Panc1 (cell line): ENCODE measurements at regions of chr7 and their contacts with region 1.

Region 1: DNA sequence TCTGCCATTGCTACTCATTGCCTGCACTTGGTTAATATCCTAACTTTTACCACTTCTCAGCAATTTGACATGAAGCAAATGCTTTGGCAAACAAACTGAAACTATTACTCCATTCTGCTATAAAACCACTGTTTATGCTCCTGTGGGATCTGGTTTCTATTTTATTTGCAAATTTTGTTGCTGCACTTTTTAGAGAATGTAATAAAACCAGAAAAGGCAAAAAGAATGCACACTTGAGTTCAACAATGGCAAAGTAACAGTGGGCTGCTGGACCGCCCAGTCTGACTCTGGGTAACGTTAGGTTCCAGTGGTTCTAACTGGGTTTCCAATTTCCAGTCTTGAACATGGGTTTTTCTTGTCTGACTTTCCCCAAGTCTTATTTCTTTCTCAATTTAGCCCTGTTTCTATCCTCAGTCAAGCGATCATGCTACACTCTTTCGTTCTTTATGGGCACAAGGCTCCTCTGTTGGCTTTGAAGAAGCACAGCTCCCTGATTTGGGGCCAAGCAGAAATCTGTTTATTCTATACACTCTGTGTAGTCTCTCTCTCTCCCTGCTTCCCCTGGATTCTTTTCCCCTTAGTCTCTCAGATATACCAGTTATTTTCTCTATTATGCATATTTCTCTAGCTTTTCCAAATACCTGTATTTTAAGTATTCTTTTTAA is 129.2 kb upstream of the FAM3C start:
- DNase-seq: no peak
- ATAC-seq: no peak
- H3K4me3 ChIP-seq: no peak overlapping the region
- H3K27ac ChIP-seq: 0 out of 2 replicates have a peak overlapping the region, but pooled peaks have one; percentile 14
- H3K4me1 ChIP-seq: peaks cover 13% of the 10 kb centered on the region
- H3K27me3 ChIP-seq: no peaks in the 10 kb centered on the region
- CTCF ChIP-seq: no peak

Region 2: GRCh38 chr7:121395961-121396757 is 129.1 kb before region 1 on chr7 and contains the start of gene FAM3C:
- CTCF ChIA-PET with region 1: no interaction called
- POLR2A ChIA-PET with region 1: no interaction called
- in situ Hi-C with region 1: no loop called
- intact Hi-C with region 1: loop called (anchors 5 kb)
- DNase-seq: peak; percentile 67
- ATAC-seq: peak; percentile 97
- H3K4me3 ChIP-seq: peak within 1 kb of the TSS; percentile 83 to 97
- H3K27ac ChIP-seq: peak within 1 kb of the TSS; percentile 97
- H3K4me1 ChIP-seq: peaks cover 18% of the 10 kb centered on the region
- H3K27me3 ChIP-seq: no peaks in the 10 kb centered on the region
- CTCF ChIP-seq: peak; percentile 98
- total RNA-seq, gene FAM3C: 55.4 TPM

Region 3: DNA sequence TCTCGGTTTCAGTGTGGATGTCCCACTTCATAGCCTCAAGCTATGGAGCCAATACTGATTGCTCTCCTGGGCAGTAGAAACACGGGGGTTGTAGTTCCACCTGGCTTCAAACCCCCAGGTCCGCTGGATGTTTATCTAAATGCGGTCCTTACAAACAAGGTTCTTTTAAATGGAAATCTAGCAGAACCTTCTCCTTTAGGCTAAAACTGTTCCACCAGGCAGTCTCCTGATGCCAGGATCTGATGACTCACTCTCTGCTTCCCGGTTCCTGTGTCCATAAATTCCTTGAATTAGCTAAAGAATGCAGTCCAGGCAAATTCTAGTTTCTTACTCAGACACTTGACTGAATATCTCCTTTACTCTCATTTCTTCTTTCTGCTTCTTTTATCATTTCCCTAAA is 20.8 kb before region 1 on chr7:
- CTCF ChIA-PET with region 1: no interaction called
- POLR2A ChIA-PET with region 1: no interaction called
- in situ Hi-C with region 1: no loop called
- intact Hi-C with region 1: no loop called
- DNase-seq: no peak
- ATAC-seq: no peak
- H3K4me3 ChIP-seq: no peak overlapping the region
- H3K27ac ChIP-seq: no peak overlapping the region
- H3K4me1 ChIP-seq: no peaks in the 10 kb centered on the region; the same call in 1 of the 2 replicates
- H3K27me3 ChIP-seq: no peaks in the 10 kb centered on the region
- CTCF ChIP-seq: no peak

Region 4: GRCh38 chr7:121730869-121731268 is 205.6 kb after region 1 on chr7:
- CTCF ChIA-PET with region 1: no interaction called
- POLR2A ChIA-PET with region 1: no interaction called
- in situ Hi-C with region 1: no loop called
- intact Hi-C with region 1: no loop called
- DNase-seq: no peak
- ATAC-seq: no peak
- H3K4me3 ChIP-seq: no peak overlapping the region
- H3K27ac ChIP-seq: no peak overlapping the region
- H3K4me1 ChIP-seq: no peaks in the 10 kb centered on the region
- H3K27me3 ChIP-seq: no peaks in the 10 kb centered on the region
- CTCF ChIP-seq: no peak